ENCODE measurements at regions of chr16 and their contacts with region 1.

Region 1: GRCh38 chr16:4288148-4288921 is 15.5 kb upstream of the TFAP4 start:
- DNase-seq: peak; percentile 54
- H3K4me3 ChIP-seq: no peak overlapping the region
- H3K27ac ChIP-seq: no peak overlapping the region
- H3K4me1 ChIP-seq: no peaks in the 10 kb centered on the region
- H3K27me3 ChIP-seq: peaks cover 0 to 4% of the 10 kb centered on the region in 2 experiments
- CTCF ChIP-seq: peak; percentile 96 to 97
- POLR2A ChIP-seq: no peak

Region 2: DNA sequence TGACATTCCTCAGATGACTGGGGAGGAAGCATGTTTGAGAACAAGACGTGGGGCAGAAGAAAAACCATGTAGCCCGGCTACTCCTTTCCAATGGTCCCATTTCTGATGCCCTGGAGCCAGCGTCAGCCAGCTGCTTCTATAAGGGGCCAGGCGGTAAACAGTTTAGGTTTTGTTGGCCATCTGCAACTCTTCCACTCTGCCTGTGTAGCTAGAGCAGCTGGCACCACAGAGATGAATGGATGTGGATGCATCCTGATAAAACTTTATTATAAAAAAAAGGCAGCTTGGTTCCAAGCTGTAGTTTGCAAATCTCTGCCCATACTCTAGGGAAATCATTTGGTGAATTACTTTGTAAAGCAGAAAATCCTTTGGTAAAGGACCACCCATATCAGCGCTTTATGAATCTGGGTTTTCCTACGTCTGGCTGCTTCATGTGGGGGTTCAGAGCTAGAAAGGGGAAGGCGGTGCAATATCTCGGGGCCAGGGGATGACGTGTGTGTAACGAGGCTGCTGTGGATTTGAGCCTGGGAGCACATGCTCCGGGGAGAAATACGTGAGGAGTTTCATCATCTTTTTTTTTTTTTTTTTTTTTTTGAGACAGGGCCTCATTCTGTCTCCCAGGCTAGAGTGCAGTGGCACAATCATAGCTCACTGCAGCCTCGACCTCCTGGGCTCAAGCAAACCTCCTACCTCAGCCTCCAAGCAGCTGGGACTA is 43.1 kb before region 1 on chr16:
- CTCF ChIA-PET with region 1: no interaction called
- POLR2A ChIA-PET with region 1: no interaction called
- dilution Hi-C with region 1: no loop called
- intact Hi-C with region 1: no loop called
- DNase-seq: no peak
- H3K4me3 ChIP-seq: no peak overlapping the region
- H3K27ac ChIP-seq: no peak overlapping the region
- H3K4me1 ChIP-seq: no peaks in the 10 kb centered on the region
- H3K27me3 ChIP-seq: no peaks in the 10 kb centered on the region
- CTCF ChIP-seq: no peak
- POLR2A ChIP-seq: no peak

Region 3: DNA sequence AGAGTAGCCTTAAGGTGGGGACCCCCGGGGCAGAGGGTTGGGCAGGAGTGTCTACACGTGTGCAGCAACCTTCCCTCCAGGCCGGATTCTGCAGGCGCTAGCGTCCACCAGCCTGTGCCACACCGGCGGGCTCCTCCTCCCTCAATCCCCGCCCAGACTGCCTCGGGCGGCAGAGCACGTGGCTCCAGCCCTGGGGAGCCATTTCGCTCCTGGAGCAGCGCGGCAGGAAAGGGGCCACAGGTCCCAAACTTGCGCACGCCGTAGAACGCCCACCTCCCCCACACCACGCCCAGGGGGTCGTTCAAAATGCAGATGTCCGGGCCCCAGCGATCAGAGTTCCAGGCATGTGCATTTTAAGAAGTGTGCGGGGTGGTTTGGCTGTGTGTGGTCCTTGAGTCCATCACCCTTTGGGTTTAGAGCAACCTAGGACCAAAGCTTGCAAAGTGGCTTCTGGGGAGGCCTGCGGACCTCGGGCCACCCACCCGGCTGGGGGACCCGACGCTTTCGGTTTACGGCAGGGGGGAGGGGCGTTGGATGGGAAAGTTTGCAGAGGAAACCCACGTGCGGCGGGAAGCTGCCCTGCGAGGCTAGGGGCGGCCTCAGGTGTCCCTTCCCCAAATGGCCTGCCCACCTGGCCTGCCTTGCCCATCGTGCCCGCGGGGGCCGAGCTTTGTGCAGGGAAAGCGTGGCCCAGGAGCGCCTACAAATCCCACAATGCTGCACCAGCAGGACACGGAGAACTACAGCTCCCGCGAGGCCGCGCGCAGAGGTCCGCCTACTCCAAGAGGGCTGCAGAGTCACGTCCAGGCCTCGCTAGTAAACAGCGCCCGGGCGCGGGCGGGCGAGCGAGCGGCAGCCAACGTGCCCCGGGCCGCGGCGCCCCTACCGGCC is 16.9 kb before region 1 on chr16:
- CTCF ChIA-PET with region 1: interaction called, 14 read pairs
- POLR2A ChIA-PET with region 1: no interaction called
- dilution Hi-C with region 1: no loop called
- intact Hi-C with region 1: loop called (anchors 2 kb)
- DNase-seq: peak; percentile 89
- H3K4me3 ChIP-seq: peak overlapping the region; percentile 58 to 89 (median 68)
- H3K27ac ChIP-seq: peak overlapping the region; percentile 51
- H3K4me1 ChIP-seq: peaks cover 15% of the 10 kb centered on the region
- H3K27me3 ChIP-seq: no peaks in the 10 kb centered on the region
- CTCF ChIP-seq: no peak
- POLR2A ChIP-seq: peak; percentile 55

Region 4: GRCh38 chr16:4298761-4299522 is 10.6 kb after region 1 on chr16:
- CTCF ChIA-PET with region 1: interaction called, 23 read pairs
- POLR2A ChIA-PET with region 1: no interaction called
- dilution Hi-C with region 1: no loop called
- intact Hi-C with region 1: no loop called
- DNase-seq: peak; percentile 65
- H3K4me3 ChIP-seq: no peak overlapping the region
- H3K27ac ChIP-seq: peak overlapping the region; percentile 69
- H3K4me1 ChIP-seq: peaks cover 15% of the 10 kb centered on the region
- H3K27me3 ChIP-seq: no peaks in the 10 kb centered on the region
- CTCF ChIP-seq: no peak
- POLR2A ChIP-seq: peak; percentile 53

Region 5: GRCh38 chr16:4315186-4316109 is 27.1 kb after region 1 on chr16 and contains the start of gene GLIS2:
- CTCF ChIA-PET with region 1: interaction called, 30 read pairs
- POLR2A ChIA-PET with region 1: no interaction called
- dilution Hi-C with region 1: no loop called
- intact Hi-C with region 1: loop called (anchors 1 kb)
- DNase-seq: peak; percentile 60
- H3K4me3 ChIP-seq: peak within 1 kb of the TSS; percentile 56 to 77 (median 59)
- H3K27ac ChIP-seq: peak within 1 kb of the TSS; percentile 22
- H3K4me1 ChIP-seq: peaks cover 21% of the 10 kb centered on the region
- H3K27me3 ChIP-seq: no peaks in the 10 kb centered on the region
- CTCF ChIP-seq: no peak
- POLR2A ChIP-seq: no peak
- total RNA-seq, gene GLIS2: 10.1 and 11.3 TPM in 2 replicates

Measured in endothelial cell of umbilical vein (primary cell).